Activated naive CD4-positive, alpha-beta T cell treated with anti-CD3 and anti-CD28 coated beads for 36 hours (primary cell): ENCODE measurements at regions of chr13 and their contacts with region 1.

Region 1: GRCh38 chr13:39777527-39778061 is 122.1 kb downstream of the COG6 start:
- DNase-seq: peak; percentile 70
- H3K4me3 Mint-ChIP-seq: no peak overlapping the region
- H3K27ac Mint-ChIP-seq: peak overlapping the region; percentile 80
- H3K4me1 Mint-ChIP-seq: peaks cover 46% of the 10 kb centered on the region
- H3K27me3 Mint-ChIP-seq: no peaks in the 10 kb centered on the region

Region 2: DNA sequence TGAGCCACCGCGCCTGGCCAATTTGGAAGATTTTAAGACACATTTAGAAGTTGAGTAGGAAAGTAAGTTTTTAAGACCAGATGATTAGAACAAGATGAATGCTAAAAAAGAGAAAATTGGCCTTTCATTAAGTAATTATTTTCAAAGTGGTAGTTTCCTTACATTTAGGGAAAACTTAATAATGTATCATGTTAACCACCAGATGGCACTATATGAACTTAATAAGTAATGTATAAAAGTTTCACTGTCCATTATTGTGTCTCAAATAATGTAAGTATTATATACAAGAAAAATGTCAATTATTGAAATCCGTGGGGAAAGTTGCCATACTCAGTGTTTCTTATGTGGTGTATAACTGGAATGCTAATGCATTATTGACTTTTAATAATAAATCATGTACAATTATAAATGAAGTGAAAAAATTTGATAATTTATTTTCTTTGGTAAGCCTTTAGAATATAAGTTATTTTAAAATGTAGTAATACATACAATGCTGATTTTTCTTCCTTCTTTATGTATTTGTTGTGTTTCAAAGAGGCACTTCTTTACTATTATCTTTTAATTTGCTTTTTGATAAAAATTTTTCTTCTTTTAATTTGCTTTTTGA is 93.0 kb before region 1 on chr13:
- CTCF ChIA-PET with region 1: interaction called, 5 read pairs
- intact Hi-C with region 1: loop called (anchors 2 kb)
- DNase-seq: no peak
- H3K4me3 Mint-ChIP-seq: no peak overlapping the region
- H3K27ac Mint-ChIP-seq: no peak overlapping the region
- H3K4me1 Mint-ChIP-seq: peaks cover 16% of the 10 kb centered on the region
- H3K27me3 Mint-ChIP-seq: no peaks in the 10 kb centered on the region

Region 3: DNA sequence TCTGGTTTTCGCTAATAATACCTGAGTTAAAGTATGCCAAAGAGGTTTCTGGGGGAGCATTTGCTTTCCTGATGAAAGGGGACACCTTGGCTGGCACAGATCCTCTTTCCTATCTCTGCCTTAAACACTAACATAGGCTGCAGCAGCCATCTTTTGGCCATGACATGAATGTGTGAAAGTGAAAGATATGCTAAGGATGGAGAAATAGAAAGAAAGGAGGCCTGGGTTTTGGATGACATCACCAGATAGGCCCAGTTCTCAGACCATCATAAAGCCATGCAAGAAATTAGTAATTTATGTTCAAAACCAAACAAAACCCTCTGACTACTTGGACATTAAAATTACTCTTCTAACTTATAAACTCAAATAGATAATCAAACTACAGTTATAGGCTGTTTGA is 157.6 kb after region 1 on chr13:
- CTCF ChIA-PET with region 1: interaction called, 4 read pairs
- intact Hi-C with region 1: loop called (anchors 2 kb)
- DNase-seq: no peak
- H3K4me3 Mint-ChIP-seq: no peak overlapping the region
- H3K27ac Mint-ChIP-seq: no peak overlapping the region
- H3K4me1 Mint-ChIP-seq: peaks cover 23% of the 10 kb centered on the region
- H3K27me3 Mint-ChIP-seq: no peaks in the 10 kb centered on the region

Region 4: GRCh38 chr13:39942552-39943273 is 165.1 kb after region 1 on chr13:
- CTCF ChIA-PET with region 1: interaction called, 13 read pairs
- intact Hi-C with region 1: loop called (anchors 1 kb)
- DNase-seq: peak; percentile 82
- H3K4me3 Mint-ChIP-seq: no peak overlapping the region
- H3K27ac Mint-ChIP-seq: no peak overlapping the region
- H3K4me1 Mint-ChIP-seq: peaks cover 7% of the 10 kb centered on the region
- H3K27me3 Mint-ChIP-seq: no peaks in the 10 kb centered on the region

Region 5: DNA sequence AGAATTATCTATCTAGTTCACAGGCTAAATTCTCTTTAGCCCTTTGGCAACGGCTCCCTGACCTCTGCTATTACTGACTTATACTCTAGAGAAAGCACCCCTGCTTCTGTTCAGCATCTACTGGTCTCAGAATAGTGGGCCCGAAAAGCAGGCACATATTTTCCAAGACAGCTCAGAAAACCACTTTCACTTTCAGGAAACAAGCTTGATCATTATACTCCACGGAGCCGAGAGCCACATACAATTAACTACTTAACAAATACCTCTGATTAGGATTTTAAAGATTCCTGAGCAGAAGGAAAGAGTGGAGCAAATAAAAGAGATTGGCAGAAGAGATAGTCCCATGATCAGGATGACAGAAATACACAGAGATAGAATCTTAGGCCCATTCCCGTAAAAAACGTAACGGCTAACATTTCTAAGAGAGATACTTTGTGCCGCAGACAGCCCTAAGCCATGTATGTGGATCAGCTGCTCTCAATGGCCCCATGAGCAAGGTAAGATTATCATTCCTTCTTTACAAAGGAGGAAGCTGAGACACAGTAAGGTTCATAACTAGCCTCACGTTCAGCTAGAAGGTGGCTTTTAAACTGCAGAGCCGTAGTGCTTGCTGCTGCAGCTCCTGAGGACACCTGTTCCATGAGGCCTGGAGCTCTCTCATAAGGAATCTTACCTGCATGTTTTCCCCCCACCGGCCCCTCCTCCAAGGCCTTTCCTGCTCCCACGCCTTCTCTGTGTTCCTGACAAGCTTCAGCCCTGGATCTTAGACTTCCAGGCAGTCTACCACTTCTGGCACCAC is 661.6 kb after region 1 on chr13:
- CTCF ChIA-PET with region 1: no interaction called
- intact Hi-C with region 1: loop called (anchors 5 kb)
- DNase-seq: peak; percentile 54
- H3K4me3 Mint-ChIP-seq: peak overlapping the region; percentile 33
- H3K27ac Mint-ChIP-seq: peak overlapping the region; percentile 46
- H3K4me1 Mint-ChIP-seq: peaks cover 40% of the 10 kb centered on the region
- H3K27me3 Mint-ChIP-seq: no peaks in the 10 kb centered on the region

Region 6: GRCh38 chr13:40517486-40518480 is 740.2 kb after region 1 on chr13:
- CTCF ChIA-PET with region 1: no interaction called
- intact Hi-C with region 1: loop called (anchors 5 kb)
- DNase-seq: peak; percentile 57
- H3K4me3 Mint-ChIP-seq: peak overlapping the region; percentile 23
- H3K27ac Mint-ChIP-seq: peak overlapping the region; percentile 87
- H3K4me1 Mint-ChIP-seq: peaks cover 78% of the 10 kb centered on the region
- H3K27me3 Mint-ChIP-seq: no peaks in the 10 kb centered on the region